HEK293T (cell line): ENCODE measurements at regions of chr7 and their contacts with region 1.

Region 1: DNA sequence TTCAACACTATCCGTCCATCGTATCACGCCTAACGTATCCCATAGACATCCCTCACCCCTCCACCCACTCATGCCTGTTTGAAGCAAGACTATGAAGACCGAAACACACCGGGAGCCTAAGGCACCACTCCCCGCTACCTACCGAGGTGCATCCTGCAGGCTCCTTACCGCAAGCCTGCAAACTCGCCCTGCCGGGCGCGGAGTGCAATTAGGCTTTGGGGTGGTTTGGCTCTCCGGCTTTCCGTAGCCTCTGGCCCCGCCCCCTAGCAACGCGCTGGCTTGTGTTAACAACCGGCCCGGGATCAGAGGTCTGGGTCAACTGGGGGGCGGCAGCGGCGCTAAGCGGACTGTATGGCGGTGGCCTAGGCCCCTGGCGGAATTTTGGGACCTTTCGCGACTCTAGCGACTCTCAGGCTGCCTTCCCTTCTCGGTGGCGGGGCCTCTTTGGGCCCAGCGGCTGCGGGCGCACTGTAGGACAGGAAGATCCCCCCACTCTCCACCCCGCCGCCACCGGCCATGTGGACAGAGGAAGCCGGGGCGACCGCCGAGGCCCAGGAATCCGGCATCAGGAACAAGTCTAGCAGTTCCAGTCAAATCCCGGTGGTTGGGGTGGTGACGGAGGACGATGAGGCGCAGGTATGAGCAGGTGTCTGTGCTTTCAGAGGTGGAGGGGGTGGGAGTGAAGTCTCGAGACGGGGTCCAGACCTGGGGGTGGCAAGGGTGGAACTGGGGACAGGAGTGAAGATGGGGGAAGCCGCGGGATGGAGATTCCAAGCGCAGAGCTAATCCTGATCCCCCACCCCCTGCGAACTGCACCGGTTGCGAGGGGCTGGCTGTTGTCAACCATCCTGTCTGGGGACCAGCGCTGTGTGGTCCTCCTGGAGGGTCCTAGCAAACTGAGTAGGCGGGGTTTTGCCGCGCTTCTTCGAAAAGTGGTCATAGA is at the start of gene CFAP69:
- DNase-seq: peak; percentile 87

Region 2: GRCh38 chr7:90211391-90212148 is 33.6 kb before region 1 on chr7 and contains the start of gene STEAP2:
- CTCF ChIA-PET with region 1: interaction called, 5 read pairs
- POLR2A ChIA-PET with region 1: interaction called, 18 read pairs
- DNase-seq: peak; percentile 80